ENCODE measurements at regions of chr10 and their contacts with region 1.

Region 1: DNA sequence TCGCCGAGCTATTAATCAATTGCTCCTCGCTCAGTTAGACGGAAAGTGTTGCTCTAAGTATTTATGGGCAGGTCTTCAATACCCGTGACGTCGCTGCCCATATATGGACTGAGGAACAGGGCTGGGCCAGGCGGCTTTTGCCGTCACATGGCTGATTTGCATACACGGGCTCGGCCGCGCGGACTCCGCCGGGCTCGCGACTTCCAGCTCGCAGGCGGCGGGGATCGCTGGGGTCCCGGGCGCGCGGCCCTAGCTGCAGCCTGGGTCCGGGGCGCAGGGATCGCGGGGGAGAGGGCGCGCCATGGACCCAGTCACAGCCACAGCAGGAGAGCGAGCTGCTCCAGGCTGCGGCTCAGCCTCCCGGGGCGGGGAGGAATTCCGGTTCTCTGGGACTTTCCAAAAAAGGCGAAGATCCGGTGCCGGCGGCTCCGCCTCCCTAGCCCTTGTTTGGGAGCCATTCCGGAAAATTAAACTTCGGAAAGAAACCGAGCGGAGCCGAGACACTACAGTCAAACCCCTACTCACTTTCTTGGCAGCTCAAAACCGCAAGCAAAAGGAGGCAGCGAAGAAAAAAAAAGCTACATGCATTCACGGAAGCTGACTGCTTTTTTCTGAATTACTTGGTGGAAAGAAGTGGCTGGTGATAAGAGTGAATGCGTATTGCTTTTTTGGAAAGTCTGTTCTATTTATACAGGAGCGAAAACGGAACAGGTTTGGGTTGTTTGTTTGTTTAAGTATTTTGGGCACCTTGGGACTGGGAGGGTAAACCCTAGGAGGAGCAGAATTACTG is at the start of gene EGR2:
- DNase-seq: peak; percentile 94
- H3K4me3 Mint-ChIP-seq: peak within 1 kb of the TSS; percentile 98
- H3K27ac Mint-ChIP-seq: peak within 1 kb of the TSS; percentile 98
- H3K4me1 Mint-ChIP-seq: peaks cover 58% of the 10 kb centered on the region
- H3K27me3 Mint-ChIP-seq: peaks cover 38% of the 10 kb centered on the region
- total RNA-seq, gene EGR2: 268 and 282 TPM in 2 replicates

Region 2: DNA sequence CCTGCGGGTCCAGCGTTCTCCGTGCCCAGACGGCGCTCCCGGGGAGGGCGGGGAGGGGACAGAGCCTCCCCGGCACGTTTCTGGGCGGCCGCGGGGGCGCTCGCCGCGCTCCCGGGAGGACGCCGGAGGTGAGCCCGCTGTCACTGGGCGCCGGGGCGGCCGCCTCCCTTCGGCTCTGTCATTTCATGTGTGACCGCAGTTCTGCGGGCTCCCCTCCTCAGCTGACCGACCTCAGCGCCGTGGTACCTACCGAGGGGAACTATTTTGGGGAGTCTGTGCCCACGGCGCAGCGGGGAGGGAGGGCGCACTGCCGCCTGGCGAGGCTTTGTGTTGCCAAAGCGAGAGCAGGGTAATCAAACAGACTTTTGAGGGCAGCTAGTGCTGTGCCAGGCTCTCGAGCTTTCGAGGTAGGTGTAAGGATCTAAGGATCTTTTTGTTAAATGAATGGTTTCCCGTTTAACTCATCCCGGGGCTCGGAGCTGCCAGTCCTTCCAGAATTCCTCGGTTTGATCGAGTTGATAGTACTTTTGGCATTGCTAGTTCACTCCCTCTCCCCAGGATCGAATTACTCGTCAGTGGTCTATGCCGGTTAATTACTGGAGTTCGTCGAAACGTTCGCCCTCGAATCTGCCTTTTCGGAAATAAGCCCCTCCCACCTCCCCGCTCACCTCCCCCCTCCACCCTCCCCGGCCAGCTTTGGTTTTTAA is 913.2 kb before region 1 on chr10:
- intact Hi-C with region 1: loop called (anchors 10 kb)
- DNase-seq: peak; percentile 69
- H3K4me3 Mint-ChIP-seq: peak overlapping the region; percentile 97
- H3K27ac Mint-ChIP-seq: peak overlapping the region; percentile 95
- H3K4me1 Mint-ChIP-seq: peaks cover 60% of the 10 kb centered on the region
- H3K27me3 Mint-ChIP-seq: no peaks in the 10 kb centered on the region

Region 3: DNA sequence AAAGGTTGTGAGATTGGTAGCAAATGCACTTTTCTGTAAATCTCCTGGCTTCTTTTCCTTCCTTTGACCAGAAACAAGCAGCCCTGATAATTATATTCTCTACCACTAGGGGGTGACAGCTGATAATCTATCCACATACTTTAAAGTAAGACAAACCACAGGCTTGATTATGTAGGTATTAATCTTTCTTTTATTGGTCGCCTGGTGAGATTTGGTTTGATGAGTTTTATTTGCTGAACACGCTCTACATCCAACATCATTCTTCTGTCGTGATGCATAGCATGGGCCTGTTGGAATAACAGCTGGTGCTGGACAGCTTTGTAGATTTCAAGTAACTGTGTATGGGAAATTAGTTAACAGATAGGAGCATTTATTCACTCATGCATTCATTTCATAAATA is 378.8 kb before region 1 on chr10:
- intact Hi-C with region 1: loop called (anchors 10 kb)
- DNase-seq: no peak
- H3K4me3 Mint-ChIP-seq: no peak overlapping the region
- H3K27ac Mint-ChIP-seq: no peak overlapping the region
- H3K4me1 Mint-ChIP-seq: peaks cover 12% of the 10 kb centered on the region
- H3K27me3 Mint-ChIP-seq: peaks cover 15% of the 10 kb centered on the region

Region 4: DNA sequence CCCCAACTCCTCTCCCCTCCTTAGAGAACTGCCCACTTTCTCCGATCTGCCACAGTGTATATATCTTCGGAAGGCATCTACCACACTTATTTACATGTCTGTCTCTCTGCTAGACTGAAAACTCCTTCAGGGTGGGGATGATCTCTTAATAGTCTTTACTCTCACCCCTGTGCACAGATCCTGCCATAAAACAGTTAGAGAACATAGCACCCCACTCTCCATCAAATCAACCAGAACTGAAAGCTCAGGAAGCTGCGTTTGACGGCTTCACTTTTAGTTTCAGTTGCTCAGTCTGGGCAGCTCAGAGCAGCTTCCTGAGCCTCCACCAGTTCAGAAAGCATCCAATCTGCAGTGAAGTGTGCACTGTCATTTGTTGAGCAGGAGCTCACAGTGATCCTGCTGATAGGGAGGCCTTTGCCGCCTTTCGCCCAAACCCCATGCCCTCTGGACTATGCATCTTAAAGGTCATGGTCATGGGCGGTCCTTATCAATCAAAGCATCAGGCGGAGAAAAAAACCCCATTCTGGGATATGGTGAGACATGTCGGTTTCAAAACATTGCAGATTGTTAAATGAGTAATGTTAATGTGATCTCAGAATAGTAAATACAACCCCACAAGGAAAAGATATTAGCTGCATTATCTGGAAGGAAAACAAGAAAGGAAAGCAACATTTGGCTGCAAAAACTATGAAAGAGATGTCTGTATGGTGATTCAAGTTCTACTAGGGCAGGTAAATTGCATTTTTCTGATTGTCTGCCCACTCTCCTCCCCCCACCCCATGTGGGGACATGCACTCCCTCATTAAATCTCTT is 179.1 kb before region 1 on chr10:
- intact Hi-C with region 1: loop called (anchors 1 kb)
- DNase-seq: peak; percentile 73
- H3K4me3 Mint-ChIP-seq: no peak overlapping the region
- H3K27ac Mint-ChIP-seq: no peak overlapping the region
- H3K4me1 Mint-ChIP-seq: peaks cover 28% of the 10 kb centered on the region
- H3K27me3 Mint-ChIP-seq: no peaks in the 10 kb centered on the region

Region 5: DNA sequence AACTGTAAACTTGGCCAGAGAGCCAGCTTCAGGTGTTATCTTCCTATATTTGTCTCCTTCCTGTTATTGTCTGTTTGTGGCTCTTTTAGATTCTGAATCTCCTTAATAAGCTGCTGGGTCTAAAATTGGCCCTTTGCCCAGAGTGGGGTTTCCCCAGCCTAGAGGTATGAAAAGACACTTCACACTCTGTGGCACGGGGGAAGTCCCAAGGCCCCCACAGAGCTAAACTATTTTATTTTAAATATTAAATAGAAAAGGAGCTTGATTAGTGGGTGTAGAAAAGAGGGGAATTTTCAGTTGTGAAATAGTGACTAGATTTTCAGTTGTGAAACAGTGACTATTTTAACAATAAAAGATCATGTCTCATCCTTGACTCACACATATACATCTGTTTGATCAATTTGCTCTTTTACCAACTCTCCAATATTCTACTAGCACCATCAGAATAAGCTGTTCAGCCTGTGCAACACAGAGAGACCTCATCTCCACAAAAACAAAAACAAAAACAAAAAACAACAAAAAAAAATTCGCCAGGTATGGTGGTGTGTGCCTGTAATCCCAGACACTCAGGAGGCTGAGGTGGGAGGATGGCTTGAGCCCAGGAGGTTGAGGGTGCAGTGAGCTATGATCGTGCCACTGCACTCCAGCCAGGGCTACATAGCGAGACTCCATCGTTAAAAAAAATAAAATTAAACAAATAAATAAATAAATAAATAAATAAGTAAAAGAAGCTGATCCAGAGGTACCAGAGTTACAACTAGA is 36.9 kb before region 1 on chr10:
- intact Hi-C with region 1: loop called (anchors 1 kb)
- DNase-seq: peak; percentile 48
- H3K4me3 Mint-ChIP-seq: peak overlapping the region; percentile 27
- H3K27ac Mint-ChIP-seq: peak overlapping the region; percentile 76
- H3K4me1 Mint-ChIP-seq: peaks cover 45% of the 10 kb centered on the region
- H3K27me3 Mint-ChIP-seq: peaks cover 19% of the 10 kb centered on the region

Region 6: DNA sequence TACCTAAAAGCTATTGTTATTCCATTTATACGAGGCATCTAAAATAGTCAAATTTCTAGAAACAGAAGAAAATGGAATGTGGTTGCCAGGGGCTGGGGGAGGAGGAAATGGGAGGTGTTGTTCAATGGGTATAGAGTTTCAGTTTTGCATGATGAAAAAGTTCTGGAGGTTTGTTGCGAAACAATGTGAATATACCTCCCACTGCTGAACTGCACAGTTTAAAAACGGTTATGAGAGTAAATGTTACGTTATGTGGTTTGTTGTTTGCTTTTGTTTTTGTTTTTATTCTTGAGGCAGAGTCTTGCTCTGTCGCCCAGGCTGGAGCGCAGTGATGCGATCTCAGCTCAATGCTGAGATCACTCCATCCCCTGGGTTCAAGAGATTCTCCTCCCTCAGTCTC is 251.7 kb after region 1 on chr10:
- intact Hi-C with region 1: loop called (anchors 2 kb)
- DNase-seq: peak; percentile 2
- H3K4me3 Mint-ChIP-seq: no peak overlapping the region
- H3K27ac Mint-ChIP-seq: peak overlapping the region; percentile 19
- H3K4me1 Mint-ChIP-seq: peaks cover 25% of the 10 kb centered on the region
- H3K27me3 Mint-ChIP-seq: peaks cover 5% of the 10 kb centered on the region

Region 7: DNA sequence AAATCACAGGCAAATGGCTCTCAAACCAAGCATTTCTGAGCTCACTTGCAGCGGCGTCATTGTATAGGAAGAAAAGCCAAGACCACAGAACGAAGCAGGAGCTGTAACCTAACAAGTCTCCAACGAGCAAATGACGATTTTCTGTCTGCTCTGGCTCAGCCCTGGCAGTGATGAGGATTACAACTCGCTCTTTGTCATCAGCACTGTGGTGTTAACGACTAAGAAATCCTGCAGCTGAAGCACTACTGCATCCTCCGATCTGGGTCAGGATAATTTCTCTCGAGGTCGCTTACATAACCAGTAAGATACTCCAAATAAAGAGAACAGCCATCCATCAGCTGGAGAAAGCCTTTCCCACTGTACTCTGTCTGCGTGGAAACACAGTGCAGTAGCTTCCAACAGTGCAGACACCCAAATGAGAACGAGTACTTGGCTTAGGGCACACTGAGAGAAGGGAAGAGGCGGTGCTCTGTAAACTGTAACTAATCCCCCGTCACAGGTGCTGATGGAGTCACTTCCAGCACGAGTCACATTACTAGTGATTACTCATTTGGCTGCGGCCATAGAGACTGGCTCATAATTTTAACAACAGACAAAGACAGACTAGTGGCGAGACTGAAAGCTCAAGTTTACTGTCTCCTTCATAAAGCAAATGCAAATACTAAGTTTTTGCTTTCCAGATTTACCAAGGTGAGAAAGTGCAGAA is 452.4 kb after region 1 on chr10:
- intact Hi-C with region 1: loop called (anchors 1 kb)
- DNase-seq: peak; percentile 81
- H3K4me3 Mint-ChIP-seq: peak overlapping the region; percentile 95
- H3K27ac Mint-ChIP-seq: peak overlapping the region; percentile 98
- H3K4me1 Mint-ChIP-seq: peaks cover 31% of the 10 kb centered on the region
- H3K27me3 Mint-ChIP-seq: no peaks in the 10 kb centered on the region

Region 8: GRCh38 chr10:63297941-63298340 is 481.4 kb after region 1 on chr10:
- intact Hi-C with region 1: no loop called
- DNase-seq: no peak
- H3K4me3 Mint-ChIP-seq: no peak overlapping the region
- H3K27ac Mint-ChIP-seq: no peak overlapping the region
- H3K4me1 Mint-ChIP-seq: no peaks in the 10 kb centered on the region
- H3K27me3 Mint-ChIP-seq: no peaks in the 10 kb centered on the region

Measured in activated T-helper 1 cell treated with anti-CD3 and anti-CD28 coated beads, Interleukin-12 subunit alpha, Interleukin-12 subunit beta, Interleukin-2, Interleukin-4 antibody, amounts not matched to agents 30 ng/mL and 10 ng/mL and 1 ng/mL, durations not matched to agents 14 hours and 24 hours and 36 hours (primary cell).